ENCODE measurements at regions of chr9 and their contacts with region 1.

Region 1: DNA sequence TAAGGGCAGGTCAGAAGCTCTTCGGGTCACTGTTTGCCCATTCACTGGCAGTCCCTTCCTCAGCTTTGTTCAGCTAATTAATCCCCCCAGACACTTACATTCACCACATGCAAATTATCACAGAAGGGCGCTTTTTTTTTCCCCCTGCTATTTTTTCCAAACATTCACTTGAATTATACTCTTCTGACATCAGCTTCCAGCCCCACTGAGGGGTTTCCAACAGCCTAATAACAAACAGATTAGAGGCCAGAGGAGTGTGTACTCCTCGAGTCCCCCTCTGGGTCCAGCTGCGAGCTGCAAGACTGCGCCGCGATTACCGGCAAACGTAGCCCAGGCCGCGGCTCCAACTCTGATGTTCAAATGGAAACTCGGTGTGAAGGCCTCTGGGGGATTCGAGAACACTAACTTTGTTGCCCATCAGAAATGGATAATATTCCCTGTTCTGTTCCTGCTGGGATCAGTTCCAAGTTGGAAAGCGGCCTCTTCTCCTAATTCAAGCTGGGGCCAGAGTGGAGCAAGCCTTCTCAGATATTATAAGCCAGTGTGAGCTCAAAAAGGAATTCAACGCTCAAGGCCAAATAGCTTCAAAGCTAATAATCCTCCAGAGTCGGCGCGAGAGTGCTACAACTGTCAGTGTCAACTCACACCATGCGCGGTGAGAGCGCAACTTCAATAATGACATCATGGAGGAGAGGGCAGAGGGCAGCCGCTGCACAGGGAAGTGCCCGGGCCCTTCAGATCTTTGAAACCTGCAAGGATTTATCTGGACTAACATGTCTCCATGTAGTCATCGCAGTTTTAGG is 560.8 kb downstream of the BNC2 start:
- DNase-seq: peak in 1 of 2 donors; percentile 80
- H3K4me3 ChIP-seq: no peak overlapping the region
- CTCF ChIP-seq: no peak
- POLR2A ChIP-seq: no peak

Region 2: DNA sequence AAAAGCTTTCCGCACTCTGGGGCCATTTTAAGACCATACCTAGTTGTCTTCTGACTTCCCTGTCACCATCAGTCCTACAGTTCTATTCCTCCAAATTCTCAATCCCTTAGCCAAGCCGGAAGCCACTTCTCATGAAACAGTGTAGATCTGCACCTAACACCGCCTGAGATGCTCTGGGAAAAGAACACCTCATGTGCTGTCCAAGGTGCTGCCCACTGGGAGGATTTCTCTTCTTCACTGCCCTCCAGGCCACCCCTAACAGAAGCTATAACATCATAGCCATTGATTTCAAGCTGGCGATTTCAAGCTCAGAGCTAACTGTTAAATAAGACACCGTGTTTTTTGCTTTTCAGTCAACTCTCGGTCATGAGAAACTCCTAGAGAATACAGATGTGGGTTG is 197.6 kb before region 1 on chr9:
- intact Hi-C with region 1: loop called (anchors 5 kb)
- DNase-seq: no peak
- H3K4me3 ChIP-seq: no peak overlapping the region
- CTCF ChIP-seq: no peak
- POLR2A ChIP-seq: no peak

Region 3: DNA sequence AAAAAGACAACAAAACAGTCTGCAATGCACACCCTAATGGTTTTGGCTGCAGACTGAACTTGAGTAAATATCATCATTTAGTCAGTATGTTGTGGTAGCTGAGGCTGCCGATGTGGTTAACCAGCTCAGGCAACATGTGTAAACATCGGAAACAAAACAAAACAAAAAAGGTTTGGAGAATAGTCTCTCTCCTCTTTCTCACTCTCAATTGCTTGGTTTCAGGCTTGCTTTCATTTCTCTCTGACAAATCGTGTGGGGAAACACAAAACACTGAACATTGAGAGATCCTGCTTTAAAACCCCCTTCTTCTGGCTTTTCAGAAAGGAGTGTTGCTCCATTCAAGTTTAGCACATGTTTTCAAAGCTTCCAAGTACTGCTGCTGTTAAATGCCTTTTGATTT is 107.5 kb after region 1 on chr9:
- intact Hi-C with region 1: no loop called
- DNase-seq: no peak
- H3K4me3 ChIP-seq: no peak overlapping the region
- CTCF ChIP-seq: no peak
- POLR2A ChIP-seq: no peak

Region 4: GRCh38 chr9:16434526-16434925 is 124.9 kb after region 1 on chr9:
- intact Hi-C with region 1: no loop called
- DNase-seq: no peak
- H3K4me3 ChIP-seq: no peak overlapping the region
- CTCF ChIP-seq: no peak
- POLR2A ChIP-seq: no peak

Region 5: DNA sequence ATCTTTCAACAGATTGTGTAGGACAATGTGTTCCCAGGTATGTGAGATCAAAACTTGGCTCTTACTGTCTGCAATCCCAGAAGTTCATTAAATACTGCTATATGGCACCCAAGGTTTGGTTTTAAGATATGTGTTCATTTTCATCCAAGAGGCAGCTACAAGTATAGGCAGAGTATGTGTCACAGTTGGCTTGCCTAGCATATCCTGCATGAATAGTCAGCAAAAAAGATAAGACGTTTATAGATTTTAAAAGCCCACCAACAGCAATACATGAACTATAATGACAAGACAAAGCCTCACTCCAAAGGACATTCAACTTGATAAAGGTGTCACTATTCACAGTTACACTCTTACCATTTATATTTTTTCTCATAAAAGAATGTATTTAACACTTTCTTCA is 461.7 kb after region 1 on chr9:
- intact Hi-C with region 1: no loop called
- DNase-seq: no peak
- H3K4me3 ChIP-seq: no peak overlapping the region
- CTCF ChIP-seq: no peak
- POLR2A ChIP-seq: no peak